Dorsolateral prefrontal cortex (tissue), 120 donors: ENCODE measurements at regions of chr3 and their contacts with region 1.

Region 1: GRCh38 chr3:98602078-98602678 is 8.8 kb upstream of the CPOX start:
- DNase-seq: peak in 3 of 10 donors; percentile 15 to 64 (median 41)
- H3K4me3 ChIP-seq: no peak overlapping the region
- H3K27ac ChIP-seq: peak overlapping the region in 11 of 59 donors; percentile 3 to 54 (median 16)
- H3K27me3 ChIP-seq: no peaks in the 10 kb centered on the region
- CTCF ChIP-seq: peak; percentile 67 to 97 (median 84)

Region 2: GRCh38 chr3:98449606-98450193 is 152.5 kb before region 1 on chr3:
- intact Hi-C with region 1: no loop called
- DNase-seq: no peak
- H3K4me3 ChIP-seq: no peak overlapping the region
- H3K27ac ChIP-seq: no peak overlapping the region
- H3K27me3 ChIP-seq: no peaks in the 10 kb centered on the region
- CTCF ChIP-seq: no peak

Region 3: GRCh38 chr3:98809557-98809956 is 207.4 kb after region 1 on chr3:
- intact Hi-C with region 1: loop called (anchors 2 kb)
- DNase-seq: no peak
- H3K4me3 ChIP-seq: no peak overlapping the region
- H3K27ac ChIP-seq: peak overlapping the region in 1 of 59 donors; percentile 17
- H3K27me3 ChIP-seq: no peaks in the 10 kb centered on the region
- CTCF ChIP-seq: no peak

Region 4: GRCh38 chr3:98994128-98994762 is 392.1 kb after region 1 on chr3:
- intact Hi-C with region 1: loop called (anchors 10 kb)
- DNase-seq: no peak
- H3K4me3 ChIP-seq: no peak overlapping the region
- H3K27ac ChIP-seq: no peak overlapping the region
- H3K27me3 ChIP-seq: no peaks in the 10 kb centered on the region
- CTCF ChIP-seq: peak; percentile 72 to 94 (median 86)